ENCODE measurements at regions of chr19 and their contacts with region 1.

Region 1: DNA sequence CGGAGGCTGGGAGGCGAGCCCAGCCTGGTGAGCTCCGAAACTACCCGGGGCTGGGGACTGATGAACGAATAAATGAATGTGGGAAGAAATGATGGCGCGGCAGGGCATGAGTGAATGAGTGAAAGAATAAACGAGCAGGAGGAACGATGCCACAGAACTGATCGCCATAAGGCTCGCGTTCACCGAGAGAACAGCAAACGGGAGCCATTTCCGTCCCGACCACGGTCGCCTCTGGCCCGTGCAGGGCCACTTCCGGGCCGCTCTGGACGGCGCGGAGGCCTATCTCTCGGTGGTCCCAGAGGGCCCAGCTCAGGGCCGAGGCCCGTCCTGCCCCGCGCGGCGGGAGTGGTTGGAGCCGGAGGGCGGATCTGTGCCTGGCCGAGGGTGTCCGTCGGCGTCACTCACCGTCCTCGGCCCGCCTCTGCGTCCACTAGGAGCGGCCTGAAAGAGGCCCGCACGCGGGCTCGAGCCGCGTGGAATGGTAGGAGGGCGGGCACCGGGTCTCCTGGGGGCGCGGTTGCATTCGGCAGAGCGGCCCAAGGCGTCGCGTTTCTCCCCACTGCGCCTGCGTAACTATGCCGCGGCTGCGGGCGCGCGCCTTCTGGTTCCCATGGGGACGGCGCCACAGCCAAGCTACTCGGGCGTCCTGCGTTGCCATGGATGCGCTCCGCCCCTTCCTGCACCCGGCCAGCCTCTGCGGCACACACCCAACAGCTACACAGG is at the start of gene ZNF497:
- DNase-seq: peak; percentile 91
- ATAC-seq: peak; percentile 96
- H3K4me3 ChIP-seq: peak within 1 kb of the TSS; percentile 76 to 92 (median 80)
- H3K27ac ChIP-seq: peak within 1 kb of the TSS; percentile 97
- H3K4me1 ChIP-seq: peaks cover 11% of the 10 kb centered on the region
- H3K27me3 ChIP-seq: no peaks in the 10 kb centered on the region
- CTCF ChIP-seq: peak; percentile 54
- EP300 ChIP-seq: no peak
- POLR2A ChIP-seq: peak; percentile 78 to 93
- RAD21 ChIP-seq: 0 out of 2 replicates have a peak, but pooled peaks have one; percentile 6
- total RNA-seq, gene ZNF497: 1.1 and 1.9 TPM in 2 replicates

Region 2: GRCh38 chr19:58326914-58327726 is 35.3 kb before region 1 on chr19 and contains the start of gene ZSCAN22:
- CTCF ChIA-PET with region 1: no interaction called
- POLR2A ChIA-PET with region 1: interaction called, 22 read pairs
- in situ Hi-C with region 1: no loop called
- intact Hi-C with region 1: no loop called
- DNase-seq: peak; percentile 93
- ATAC-seq: peak; percentile 95
- H3K4me3 ChIP-seq: peak within 1 kb of the TSS; percentile 83 to 95 (median 89)
- H3K27ac ChIP-seq: peak within 1 kb of the TSS; percentile 78
- H3K4me1 ChIP-seq: peaks cover 41% of the 10 kb centered on the region
- H3K27me3 ChIP-seq: no peaks in the 10 kb centered on the region; a peak in 1 of 5 replicates
- CTCF ChIP-seq: peak; percentile 9; the same call in 1 of the 2 replicates
- EP300 ChIP-seq: peak in 1 of 2 experiments; percentile 40; a peak in 1 of 4 replicates
- POLR2A ChIP-seq: peak; percentile 59 to 75
- RAD21 ChIP-seq: peak; percentile 54; the same call in 1 of the 2 replicates
- total RNA-seq, gene ZSCAN22: 2.5 and 3.1 TPM in 2 replicates

Region 3: GRCh38 chr19:58380722-58381466 is 18.5 kb after region 1 on chr19 and contains the start of gene ZNF837:
- CTCF ChIA-PET with region 1: no interaction called
- POLR2A ChIA-PET with region 1: interaction called, 33 read pairs
- in situ Hi-C with region 1: no loop called
- intact Hi-C with region 1: loop called (anchors 2 kb)
- DNase-seq: peak; percentile 99
- ATAC-seq: peak; percentile 90
- H3K4me3 ChIP-seq: peak within 1 kb of the TSS; percentile 56 to 81 (median 74)
- H3K27ac ChIP-seq: peak within 1 kb of the TSS; percentile 86
- H3K4me1 ChIP-seq: peaks cover 32% of the 10 kb centered on the region
- H3K27me3 ChIP-seq: no peaks in the 10 kb centered on the region
- CTCF ChIP-seq: peak; percentile 46; the same call in 1 of the 2 replicates
- EP300 ChIP-seq: peak in 1 of 2 experiments; percentile 53; a peak in 1 of 4 replicates
- POLR2A ChIP-seq: peak; percentile 76 to 79
- RAD21 ChIP-seq: peak; percentile 76; the same call in 1 of the 2 replicates
- total RNA-seq, gene ZNF837: 0.73 and 1.3 TPM in 2 replicates

Region 4: GRCh38 chr19:58408152-58409009 is 45.9 kb after region 1 on chr19 and contains the start of gene ZNF584:
- CTCF ChIA-PET with region 1: no interaction called
- POLR2A ChIA-PET with region 1: interaction called, 16 read pairs
- in situ Hi-C with region 1: no loop called
- intact Hi-C with region 1: no loop called
- DNase-seq: peak; percentile 89
- ATAC-seq: peak; percentile 90
- H3K4me3 ChIP-seq: peak within 1 kb of the TSS; percentile 89 to 98 (median 95)
- H3K27ac ChIP-seq: peak within 1 kb of the TSS; percentile 85
- H3K4me1 ChIP-seq: peaks cover 32% of the 10 kb centered on the region
- H3K27me3 ChIP-seq: no peaks in the 10 kb centered on the region; a peak in 1 of 5 replicates
- CTCF ChIP-seq: peak; percentile 47
- EP300 ChIP-seq: no peak
- POLR2A ChIP-seq: peak; percentile 89 to 96
- RAD21 ChIP-seq: peak; percentile 36; the same call in 1 of the 2 replicates
- total RNA-seq, gene ZNF584: 6.8 and 7.0 TPM in 2 replicates

Region 5: GRCh38 chr19:58519355-58520256 is 157.2 kb after region 1 on chr19 and contains the start of gene ZBTB45:
- CTCF ChIA-PET with region 1: no interaction called
- POLR2A ChIA-PET with region 1: interaction called, 11 read pairs
- in situ Hi-C with region 1: no loop called
- intact Hi-C with region 1: no loop called
- DNase-seq: peak; percentile 90
- ATAC-seq: peak; percentile 84
- H3K4me3 ChIP-seq: peak within 1 kb of the TSS; percentile 78 to 94 (median 90)
- H3K27ac ChIP-seq: peak within 1 kb of the TSS; percentile 88
- H3K4me1 ChIP-seq: peaks cover 28% of the 10 kb centered on the region
- H3K27me3 ChIP-seq: no peaks in the 10 kb centered on the region; a peak in 1 of 5 replicates
- CTCF ChIP-seq: peak; percentile 96
- EP300 ChIP-seq: peak in 1 of 2 experiments; percentile 62; a peak in 2 of 4 replicates
- POLR2A ChIP-seq: peak; percentile 64 to 80; a peak in 3 of 4 replicates
- RAD21 ChIP-seq: peak; percentile 86
- total RNA-seq, gene ZBTB45: 2.0 and 3.7 TPM in 2 replicates

Measured in HepG2 (cell line).